Activated naive CD4-positive, alpha-beta T cell treated with anti-CD3 and anti-CD28 coated beads for 36 hours (primary cell): ENCODE measurements at regions of chr3 and their contacts with region 1.

Region 1: GRCh38 chr3:19065027-19065426 is 83.3 kb upstream of the KCNH8 start:
- DNase-seq: no peak
- H3K4me3 Mint-ChIP-seq: no peak overlapping the region
- H3K27ac Mint-ChIP-seq: no peak overlapping the region
- H3K4me1 Mint-ChIP-seq: no peaks in the 10 kb centered on the region
- H3K27me3 Mint-ChIP-seq: peaks cover 2% of the 10 kb centered on the region

Region 2: GRCh38 chr3:19075037-19075436 is 10.0 kb after region 1 on chr3:
- CTCF ChIA-PET with region 1: no interaction called
- intact Hi-C with region 1: no loop called
- DNase-seq: no peak
- H3K4me3 Mint-ChIP-seq: no peak overlapping the region
- H3K27ac Mint-ChIP-seq: no peak overlapping the region
- H3K4me1 Mint-ChIP-seq: no peaks in the 10 kb centered on the region
- H3K27me3 Mint-ChIP-seq: peaks cover 2% of the 10 kb centered on the region

Region 3: GRCh38 chr3:19250959-19251610 is 186.1 kb after region 1 on chr3:
- CTCF ChIA-PET with region 1: no interaction called
- intact Hi-C with region 1: loop called (anchors 5 kb)
- DNase-seq: peak; percentile 12
- H3K4me3 Mint-ChIP-seq: no peak overlapping the region
- H3K27ac Mint-ChIP-seq: no peak overlapping the region
- H3K4me1 Mint-ChIP-seq: peaks cover 5% of the 10 kb centered on the region
- H3K27me3 Mint-ChIP-seq: peaks cover 7% of the 10 kb centered on the region

Region 4: GRCh38 chr3:19348929-19349564 is 284.0 kb after region 1 on chr3:
- CTCF ChIA-PET with region 1: no interaction called
- intact Hi-C with region 1: loop called (anchors 1 kb)
- DNase-seq: peak; percentile 22
- H3K4me3 Mint-ChIP-seq: no peak overlapping the region
- H3K27ac Mint-ChIP-seq: no peak overlapping the region
- H3K4me1 Mint-ChIP-seq: no peaks in the 10 kb centered on the region
- H3K27me3 Mint-ChIP-seq: peaks cover 6% of the 10 kb centered on the region

Region 5: DNA sequence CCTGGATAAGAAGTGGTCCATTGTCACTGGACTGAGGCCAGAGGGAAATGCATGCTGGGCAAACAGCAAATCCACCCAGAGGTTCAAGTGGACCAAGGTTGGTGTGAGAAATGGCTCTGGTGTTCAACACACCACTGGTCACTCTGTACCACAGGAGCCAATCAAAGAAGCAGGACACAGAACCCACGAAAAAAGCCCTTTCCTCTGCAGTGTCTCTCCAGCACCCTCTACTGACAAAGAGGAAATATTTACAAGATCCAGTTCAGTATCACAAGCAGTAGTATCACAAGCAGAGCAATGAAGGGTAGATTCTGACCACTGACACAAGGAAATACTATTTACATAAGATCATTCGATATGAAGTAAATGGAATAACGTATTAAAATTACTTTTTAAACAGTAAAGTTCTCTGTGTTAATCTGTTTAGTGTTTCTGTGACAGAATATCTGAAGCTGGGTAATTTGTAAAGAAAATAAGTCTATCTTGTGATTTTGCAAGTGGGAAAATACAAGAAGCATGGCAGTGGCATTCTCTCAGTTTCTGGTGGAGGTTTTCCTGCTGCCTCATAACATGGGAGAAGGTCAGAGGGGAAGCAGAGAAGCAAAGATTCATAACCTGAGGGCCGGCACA is 478.3 kb after region 1 on chr3:
- CTCF ChIA-PET with region 1: no interaction called
- intact Hi-C with region 1: loop called (anchors 10 kb)
- DNase-seq: no peak
- H3K4me3 Mint-ChIP-seq: no peak overlapping the region
- H3K27ac Mint-ChIP-seq: no peak overlapping the region
- H3K4me1 Mint-ChIP-seq: no peaks in the 10 kb centered on the region
- H3K27me3 Mint-ChIP-seq: no peaks in the 10 kb centered on the region